Mammary epithelial cell (primary cell): ENCODE measurements at regions of chr19 and their contacts with region 1.

Region 1: GRCh38 chr19:47130591-47131227 is at the start of gene SAE1:
- DNase-seq: peak; percentile 92
- H3K4me3 ChIP-seq: peak within 1 kb of the TSS; percentile 71 to 98 (median 82)
- H3K27ac ChIP-seq: peak within 1 kb of the TSS; percentile 81
- H3K4me1 ChIP-seq: peaks cover 3% of the 10 kb centered on the region
- H3K27me3 ChIP-seq: no peaks in the 10 kb centered on the region
- CTCF ChIP-seq: peak in 1 of 2 donors; percentile 66
- total RNA-seq, gene SAE1: 62.0 to 106 TPM

Region 2: DNA sequence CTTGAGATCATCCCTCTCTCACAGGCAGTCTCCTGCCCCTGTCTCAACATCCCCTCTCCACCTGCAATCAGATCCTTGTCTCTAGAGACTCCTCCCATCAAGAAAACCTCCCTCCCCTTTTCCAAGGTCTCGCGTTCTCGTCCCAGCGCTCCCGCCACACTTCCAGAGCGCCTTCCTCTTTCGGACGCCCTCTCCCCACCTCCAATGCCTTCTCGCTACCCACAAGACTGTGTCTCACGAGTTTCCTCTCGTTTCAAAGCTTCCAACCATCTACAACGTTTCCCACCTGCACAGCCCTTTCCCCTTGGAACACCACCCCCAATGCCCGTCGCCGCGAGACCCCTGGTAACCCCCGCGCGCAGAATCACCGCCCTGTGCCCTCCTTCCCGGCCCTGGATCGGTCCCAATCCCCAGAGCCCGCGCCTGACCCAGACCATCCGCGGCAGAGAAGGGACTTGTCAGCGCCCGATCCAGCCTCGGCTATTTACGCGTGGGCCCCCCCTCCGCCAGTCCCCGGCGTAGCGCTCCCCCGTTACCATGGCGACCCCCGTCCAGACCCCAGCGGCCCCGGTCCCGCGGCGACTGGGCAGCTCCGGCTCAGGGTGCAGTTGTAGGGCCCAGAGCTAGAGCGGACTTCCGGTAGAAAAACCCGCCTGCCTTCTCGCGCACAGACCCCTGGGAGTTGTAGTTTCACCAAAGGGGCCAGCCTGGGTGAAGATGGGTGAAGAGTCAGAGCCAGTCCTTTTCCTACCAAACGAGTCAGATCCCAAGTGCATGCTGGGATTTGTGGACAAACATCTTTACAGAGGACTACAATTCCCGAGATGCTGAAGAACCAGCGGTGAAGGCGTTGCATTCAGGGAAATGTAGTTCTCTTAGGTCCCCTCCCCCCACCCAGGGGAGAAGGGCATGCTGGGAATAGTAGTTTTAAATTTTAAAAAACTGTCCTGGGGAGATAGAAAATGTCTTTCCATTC is 280.2 kb before region 1 on chr19 and contains the start of gene AP2S1:
- CTCF ChIA-PET with region 1: no interaction called
- dilution Hi-C with region 1: no loop called
- in situ Hi-C with region 1: loop called in 1 of 2 experiments (anchors 25 kb)
- intact Hi-C with region 1: no loop called
- DNase-seq: peak; percentile 98
- H3K4me3 ChIP-seq: peak within 1 kb of the TSS; percentile 54 to 93 (median 89)
- H3K27ac ChIP-seq: peak within 1 kb of the TSS; percentile 73
- H3K4me1 ChIP-seq: peaks cover 6% of the 10 kb centered on the region
- H3K27me3 ChIP-seq: no peaks in the 10 kb centered on the region
- CTCF ChIP-seq: no peak
- total RNA-seq, gene AP2S1: 67.5 to 257 TPM

Region 3: DNA sequence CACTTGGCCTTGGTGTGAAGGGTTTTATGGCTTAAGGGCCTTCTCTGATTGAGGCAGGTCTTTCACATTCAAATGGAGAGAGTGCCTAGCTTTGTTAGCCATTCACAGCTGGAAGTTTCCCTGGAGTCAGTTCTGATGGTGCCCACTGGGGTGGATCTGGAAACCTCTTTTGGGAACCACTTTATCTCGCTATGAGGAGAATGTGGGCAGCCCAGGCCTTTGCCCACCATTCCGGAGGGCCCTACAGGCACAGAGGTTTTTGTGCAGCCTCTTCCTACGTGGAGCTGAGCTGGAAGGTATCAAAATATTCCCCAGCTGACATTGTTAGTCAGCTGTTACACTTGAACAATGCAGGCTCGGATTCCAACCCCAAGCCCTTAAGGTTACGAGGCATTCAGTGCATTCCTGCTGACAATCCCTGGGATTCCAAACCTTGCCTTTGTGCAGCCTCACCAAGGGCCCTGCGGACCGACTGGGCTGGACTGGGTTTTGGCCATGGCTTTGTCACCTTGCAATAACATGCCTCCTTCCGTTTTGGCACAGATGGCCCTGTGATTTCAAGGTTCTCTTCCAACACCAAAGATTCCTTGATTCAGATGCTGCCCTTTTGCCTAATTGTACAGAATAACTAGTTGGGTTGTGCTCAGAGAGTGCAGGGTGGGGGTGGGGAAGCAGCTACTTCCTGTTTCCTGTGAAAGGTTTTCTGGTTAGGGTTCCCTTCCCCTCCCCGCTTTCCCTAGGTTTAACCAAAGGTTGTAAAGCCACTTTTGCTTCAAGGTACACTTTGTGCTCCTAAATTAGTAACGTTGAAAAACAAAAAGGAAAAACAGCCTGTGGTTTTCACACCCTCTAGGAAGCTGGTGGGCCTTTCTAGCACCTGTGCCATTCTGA is 27.0 kb after region 1 on chr19:
- CTCF ChIA-PET with region 1: interaction called, 19 read pairs
- dilution Hi-C with region 1: no loop called
- in situ Hi-C with region 1: no loop called
- intact Hi-C with region 1: no loop called
- DNase-seq: no peak
- H3K4me3 ChIP-seq: no peak overlapping the region
- H3K27ac ChIP-seq: peak overlapping the region; percentile 35
- H3K4me1 ChIP-seq: peaks cover 41% of the 10 kb centered on the region
- H3K27me3 ChIP-seq: no peaks in the 10 kb centered on the region
- CTCF ChIP-seq: peak in 1 of 2 donors; percentile 19

Region 4: DNA sequence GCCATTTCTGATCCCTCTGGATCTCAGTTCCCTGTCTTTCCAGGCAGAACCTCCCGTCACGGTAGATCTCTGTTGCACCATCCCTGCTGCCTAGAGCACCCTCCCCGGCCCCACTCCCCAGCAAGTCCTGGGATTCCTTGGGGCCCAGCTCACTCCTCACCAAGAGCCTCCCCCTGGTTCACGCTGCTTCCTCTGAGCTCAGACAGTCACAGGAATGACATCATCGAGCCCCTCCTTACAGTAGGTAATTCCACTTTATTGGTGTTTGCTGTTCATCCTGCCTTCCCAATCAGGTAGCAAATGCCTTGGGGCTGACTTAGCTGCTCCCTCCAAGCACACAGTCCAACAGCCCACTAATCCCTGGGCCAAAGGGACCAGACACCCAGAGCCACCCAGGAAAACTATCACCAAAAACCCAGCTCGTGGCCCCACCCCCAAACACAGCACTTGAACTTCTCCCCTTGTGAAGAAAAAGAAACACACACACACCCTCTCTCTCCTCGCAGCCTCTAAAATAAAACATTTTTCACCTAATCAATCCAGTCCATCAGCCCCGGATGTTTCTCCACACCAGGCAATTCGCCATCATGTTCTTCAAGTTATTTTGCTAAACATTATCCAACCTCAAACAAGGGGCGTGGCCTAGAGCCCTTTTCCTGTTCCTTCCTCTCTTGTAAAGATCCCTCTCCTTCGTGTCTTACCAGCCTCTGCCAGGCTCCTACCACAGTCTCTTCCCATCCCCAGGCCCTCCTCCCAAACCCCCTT is 381.7 kb after region 1 on chr19:
- CTCF ChIA-PET with region 1: no interaction called
- dilution Hi-C with region 1: no loop called
- in situ Hi-C with region 1: no loop called
- intact Hi-C with region 1: no loop called
- DNase-seq: no peak
- H3K4me3 ChIP-seq: no peak overlapping the region
- H3K27ac ChIP-seq: no peak overlapping the region
- H3K4me1 ChIP-seq: peaks cover 31% of the 10 kb centered on the region
- H3K27me3 ChIP-seq: no peaks in the 10 kb centered on the region
- CTCF ChIP-seq: no peak